ENCODE measurements at regions of chr5 and their contacts with region 1.

Region 1: GRCh38 chr5:132495667-132496190 is 5.2 kb upstream of the IRF1 start:
- DNase-seq: peak; percentile 75
- ATAC-seq: peak; percentile 14
- H3K4me3 Mint-ChIP-seq: peak overlapping the region; percentile 85
- H3K27ac Mint-ChIP-seq: peak overlapping the region; percentile 82; the same call in 1 of the 2 replicates
- H3K4me1 Mint-ChIP-seq: peaks cover 23% of the 10 kb centered on the region
- H3K27me3 Mint-ChIP-seq: peaks cover 23% of the 10 kb centered on the region
- CTCF ChIP-seq: no peak

Region 2: DNA sequence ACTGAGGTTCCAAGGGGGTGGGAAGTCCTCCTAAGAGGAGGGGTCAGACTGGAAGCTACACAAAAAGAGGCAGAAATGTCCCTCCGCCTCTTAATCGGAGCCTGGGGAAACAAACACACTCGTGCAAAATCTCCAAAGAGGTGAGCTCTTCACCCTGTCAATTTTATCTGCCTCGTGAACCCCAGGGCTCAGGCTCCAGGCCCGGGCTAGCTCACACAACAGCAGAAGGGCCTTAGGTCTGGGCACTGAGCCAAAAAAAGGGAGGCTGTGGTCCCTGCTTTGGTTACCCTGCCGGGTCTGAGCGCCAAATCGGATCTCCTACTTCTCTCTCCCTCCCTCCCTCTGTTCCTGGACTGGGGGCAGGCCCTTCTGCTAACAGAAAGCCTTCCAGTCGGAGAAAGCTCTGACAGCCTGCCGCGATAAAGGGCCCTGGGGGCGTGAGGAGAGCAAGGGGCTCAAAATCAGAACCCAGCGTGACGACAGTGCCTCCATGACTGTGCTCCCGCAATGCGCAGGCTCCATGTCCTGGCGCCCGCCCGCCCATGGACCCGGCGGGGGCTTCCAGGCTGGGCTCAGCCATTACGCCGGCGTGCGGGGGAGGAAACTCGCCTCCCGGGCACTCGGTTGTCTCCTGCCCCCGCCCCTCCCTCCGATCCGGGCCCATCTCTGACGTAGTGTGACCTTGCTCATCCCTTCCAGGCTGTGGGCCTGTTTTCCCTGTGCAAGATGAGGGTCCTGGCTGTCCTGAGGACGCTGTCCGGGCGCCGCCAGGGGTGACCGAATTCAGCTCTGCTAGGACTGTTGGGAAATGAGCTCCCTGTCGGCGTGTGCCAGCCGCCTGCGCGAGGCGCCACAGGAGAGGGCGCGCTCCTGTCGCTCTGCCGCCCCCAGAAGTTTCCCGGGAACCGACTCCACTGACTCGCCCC is 202.4 kb before region 1 on chr5:
- CTCF ChIA-PET with region 1: interaction called, 4 read pairs
- POLR2A ChIA-PET with region 1: interaction called, 11 read pairs
- DNase-seq: peak; percentile 77
- ATAC-seq: peak; percentile 57
- H3K4me3 Mint-ChIP-seq: peak overlapping the region; percentile 83
- H3K27ac Mint-ChIP-seq: peak overlapping the region; percentile 84
- H3K4me1 Mint-ChIP-seq: peaks cover 13% of the 10 kb centered on the region
- H3K27me3 Mint-ChIP-seq: peaks cover 38% of the 10 kb centered on the region
- CTCF ChIP-seq: no peak

Region 3: DNA sequence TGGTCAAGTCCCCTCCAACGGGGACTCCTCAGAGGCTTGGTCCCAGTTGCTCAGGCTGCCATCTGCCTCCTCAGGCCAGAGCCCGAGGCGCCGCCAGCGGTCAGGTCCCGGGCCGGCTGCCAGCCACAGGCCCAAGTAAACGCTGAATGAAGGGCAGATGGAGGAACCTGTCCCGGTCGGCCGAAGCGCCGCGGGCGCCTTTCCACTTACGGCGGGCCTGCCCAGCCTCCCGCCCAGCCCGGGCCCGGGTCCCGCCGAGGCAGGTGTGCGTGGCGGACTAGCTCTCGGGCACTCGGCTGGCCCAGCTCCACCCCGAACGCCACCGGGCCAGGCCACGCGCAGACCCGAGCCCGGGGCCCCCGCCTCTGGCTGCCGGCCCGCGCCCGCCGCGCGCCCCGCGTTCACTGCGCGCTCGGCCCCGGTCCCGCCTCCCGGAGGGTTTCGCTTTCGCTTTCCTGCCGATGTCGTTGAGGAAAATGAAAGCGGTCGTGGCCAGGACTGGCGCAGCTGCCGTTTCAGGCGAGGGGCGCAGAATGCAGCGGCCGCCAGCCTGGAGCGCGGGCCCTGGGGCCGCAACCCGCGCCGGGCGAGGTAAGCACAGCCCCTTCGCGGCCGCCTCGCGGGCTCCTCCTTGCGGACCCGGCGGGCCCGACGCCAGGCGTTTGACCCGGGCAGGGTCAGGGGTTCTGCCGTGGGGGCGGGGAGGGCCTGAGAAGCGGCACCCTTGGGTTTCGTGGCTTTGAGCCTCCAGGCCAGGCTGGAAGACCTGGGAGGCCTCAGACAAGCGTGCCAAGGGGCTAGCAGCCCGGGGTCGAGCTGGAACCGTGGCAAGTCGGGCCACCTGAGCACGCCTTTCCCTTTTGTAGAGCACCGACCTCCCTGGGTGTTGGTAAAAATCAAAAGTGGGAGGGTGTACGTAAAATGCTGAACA is 85.0 kb before region 1 on chr5:
- CTCF ChIA-PET with region 1: interaction called, 23 read pairs
- POLR2A ChIA-PET with region 1: interaction called, 3 read pairs
- DNase-seq: peak; percentile 88
- ATAC-seq: peak; percentile 98
- H3K4me3 Mint-ChIP-seq: peak overlapping the region; percentile 70
- H3K27ac Mint-ChIP-seq: peak overlapping the region; percentile 44
- H3K4me1 Mint-ChIP-seq: peaks cover 8% of the 10 kb centered on the region
- H3K27me3 Mint-ChIP-seq: peaks cover 5% of the 10 kb centered on the region
- CTCF ChIP-seq: peak; percentile 56

Region 4: GRCh38 chr5:132426525-132427138 is 69.1 kb before region 1 on chr5:
- CTCF ChIA-PET with region 1: interaction called, 52 read pairs
- POLR2A ChIA-PET with region 1: interaction called, 8 read pairs
- DNase-seq: peak; percentile 41
- ATAC-seq: peak; percentile 85
- H3K4me3 Mint-ChIP-seq: no peak overlapping the region
- H3K27ac Mint-ChIP-seq: no peak overlapping the region
- H3K4me1 Mint-ChIP-seq: peaks cover 18% of the 10 kb centered on the region
- H3K27me3 Mint-ChIP-seq: no peaks in the 10 kb centered on the region
- CTCF ChIP-seq: no peak

Region 5: GRCh38 chr5:132526290-132526973 is 30.7 kb after region 1 on chr5:
- CTCF ChIA-PET with region 1: interaction called, 18 read pairs
- POLR2A ChIA-PET with region 1: no interaction called
- DNase-seq: peak; percentile 42
- ATAC-seq: peak; percentile 86
- H3K4me3 Mint-ChIP-seq: peak overlapping the region; percentile 52
- H3K27ac Mint-ChIP-seq: no peak overlapping the region
- H3K4me1 Mint-ChIP-seq: no peaks in the 10 kb centered on the region
- H3K27me3 Mint-ChIP-seq: no peaks in the 10 kb centered on the region; the same call in 1 of the 2 replicates
- CTCF ChIP-seq: peak; percentile 89; the same call in 1 of the 2 replicates

Measured in WTC11 (cell line).